ENCODE measurements at regions of chr18 and their contacts with region 1.

Region 1: GRCh38 chr18:49052891-49053644 is 102.3 kb upstream of the SMAD7 start:
- DNase-seq: peak; percentile 75
- H3K4me3 ChIP-seq: no peak overlapping the region
- H3K27ac ChIP-seq: peak overlapping the region; percentile 96 to 98
- H3K4me1 ChIP-seq: peaks cover 14 to 20% of the 10 kb centered on the region in 2 experiments
- H3K27me3 ChIP-seq: no peaks in the 10 kb centered on the region
- CTCF ChIP-seq: no peak
- EP300 ChIP-seq: peak; percentile 87 to 94
- RAD21 ChIP-seq: peak; percentile 34

Region 2: GRCh38 chr18:49041435-49042245 is 11.4 kb before region 1 on chr18:
- CTCF ChIA-PET with region 1: interaction called, 28 read pairs
- POLR2A ChIA-PET with region 1: no interaction called
- DNase-seq: no peak
- H3K4me3 ChIP-seq: no peak overlapping the region
- H3K27ac ChIP-seq: no peak overlapping the region
- H3K4me1 ChIP-seq: peaks cover 0 to 2% of the 10 kb centered on the region in 2 experiments; a peak in 1 of 4 replicates
- H3K27me3 ChIP-seq: no peaks in the 10 kb centered on the region
- CTCF ChIP-seq: peak; percentile 65
- EP300 ChIP-seq: no peak
- RAD21 ChIP-seq: peak; percentile 64